Activated CD4-positive, alpha-beta T cell treated with anti-CD3 and anti-CD28 coated beads for 36 hours (primary cell): ENCODE measurements at regions of chr3 and their contacts with region 1.

Region 1: DNA sequence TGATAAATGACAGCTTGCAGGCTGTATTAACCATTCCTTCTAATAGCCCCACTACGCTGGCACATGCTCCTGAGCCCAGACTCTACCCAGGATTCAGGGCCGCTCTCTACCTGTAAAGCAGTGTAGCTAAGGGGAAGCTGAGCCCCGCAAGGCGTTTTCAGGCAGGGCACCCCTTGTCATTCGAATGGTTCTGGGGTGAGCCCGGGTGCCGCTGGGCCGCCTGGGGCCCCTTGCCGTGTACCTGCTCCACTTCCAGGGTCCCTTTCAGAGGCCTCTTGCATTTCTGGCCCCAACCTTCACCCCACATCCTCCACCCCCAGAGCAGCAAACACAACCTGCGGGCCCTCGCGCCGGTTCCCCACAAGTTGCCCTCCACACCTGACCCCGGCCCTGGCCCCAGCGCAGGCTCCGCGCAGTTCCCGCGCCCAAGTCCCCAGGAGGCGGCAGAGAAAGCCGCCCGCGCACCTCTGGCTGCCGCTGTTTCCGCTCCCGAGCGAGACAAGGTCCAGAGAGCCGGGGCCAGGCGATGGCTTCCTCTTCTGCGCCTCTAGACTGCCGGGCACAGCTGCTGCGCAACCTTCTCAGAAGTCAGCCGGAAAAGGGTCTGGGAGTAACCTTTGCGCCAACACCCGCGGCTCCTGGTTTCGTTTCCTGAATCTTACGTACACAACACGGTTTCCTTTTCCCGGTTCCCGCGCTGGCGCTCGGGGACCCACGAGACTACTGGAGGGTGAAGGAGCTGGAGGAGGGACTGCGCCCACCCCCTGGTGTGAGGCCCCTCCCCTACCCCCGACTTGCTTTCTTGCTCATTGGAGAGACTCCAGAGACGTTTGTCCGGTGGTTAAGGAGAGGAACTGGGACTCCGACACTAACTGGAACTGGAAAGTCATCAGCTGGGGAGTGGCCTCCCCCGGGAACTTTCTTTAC is at the start of gene PLSCR1:
- DNase-seq: peak; percentile 89
- ATAC-seq: peak; percentile 90
- H3K4me3 Mint-ChIP-seq: peak within 1 kb of the TSS; percentile 90
- H3K27ac Mint-ChIP-seq: peak within 1 kb of the TSS; percentile 88
- H3K4me1 Mint-ChIP-seq: peaks cover 52% of the 10 kb centered on the region
- H3K27me3 Mint-ChIP-seq: no peaks in the 10 kb centered on the region
- total RNA-seq, gene PLSCR1: 65.1 to 66.1 TPM

Region 2: GRCh38 chr3:146464005-146464595 is 80.2 kb before region 1 on chr3:
- CTCF ChIA-PET with region 1: interaction called, 6 read pairs
- POLR2A ChIA-PET with region 1: interaction called, 4 read pairs
- intact Hi-C with region 1: loop called (anchors 1 to 2 kb)
- DNase-seq: no peak
- ATAC-seq: peak; percentile 82
- H3K4me3 Mint-ChIP-seq: no peak overlapping the region
- H3K27ac Mint-ChIP-seq: peak overlapping the region; percentile 14
- H3K4me1 Mint-ChIP-seq: peaks cover 13% of the 10 kb centered on the region
- H3K27me3 Mint-ChIP-seq: no peaks in the 10 kb centered on the region

Region 3: DNA sequence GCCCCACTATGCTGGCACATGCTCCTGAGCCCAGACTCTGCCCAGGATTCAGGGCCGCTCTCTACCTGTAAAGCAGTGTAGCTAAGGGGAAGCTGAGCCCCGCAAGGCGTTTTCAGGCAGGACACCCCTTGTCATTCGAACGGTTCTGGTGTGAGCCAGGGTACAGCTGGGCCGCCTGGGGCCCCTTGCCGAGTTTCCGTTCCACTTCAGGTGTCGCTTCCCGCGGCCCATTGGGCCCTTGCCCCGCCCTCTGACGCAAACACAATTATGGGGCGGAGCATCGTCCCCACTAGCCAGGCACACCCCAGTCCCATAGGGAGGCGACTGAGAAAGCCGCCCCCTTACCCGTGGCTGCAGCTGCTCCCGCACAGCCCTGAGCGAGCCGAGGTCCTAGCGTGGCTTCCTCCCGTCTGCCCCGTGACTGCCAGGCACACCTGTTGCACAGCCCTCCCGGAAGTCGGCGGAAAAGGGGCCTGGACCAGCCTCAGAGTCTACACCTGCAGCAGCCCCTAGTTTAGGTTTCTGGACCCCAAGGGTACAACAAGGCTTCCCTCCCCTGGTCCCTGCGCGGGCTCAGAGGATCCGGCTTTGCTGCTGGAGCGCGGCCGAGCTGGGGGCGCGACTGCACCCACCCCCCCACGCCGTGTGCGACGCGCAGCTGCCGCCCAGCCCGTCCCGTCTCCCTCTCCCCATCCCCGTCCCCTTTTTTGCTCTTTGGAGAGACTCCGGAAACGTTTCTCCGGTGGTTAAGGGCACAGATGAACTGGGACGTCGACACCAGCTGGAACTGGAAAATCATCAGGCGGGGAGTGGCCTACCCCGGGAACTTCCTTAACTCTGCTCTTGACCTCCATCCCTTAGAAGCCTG is 74.9 kb before region 1 on chr3 and contains the start of gene PLSCR2:
- CTCF ChIA-PET with region 1: interaction called, 6 read pairs
- POLR2A ChIA-PET with region 1: interaction called, 4 read pairs
- intact Hi-C with region 1: loop called (anchors 1 to 2 kb)
- DNase-seq: peak; percentile 83
- ATAC-seq: peak; percentile 95
- H3K4me3 Mint-ChIP-seq: peak within 1 kb of the TSS; percentile 67
- H3K27ac Mint-ChIP-seq: peak within 1 kb of the TSS; percentile 74
- H3K4me1 Mint-ChIP-seq: peaks cover 3% of the 10 kb centered on the region
- H3K27me3 Mint-ChIP-seq: no peaks in the 10 kb centered on the region
- total RNA-seq, gene PLSCR2: 0.25 TPM in 1 of 2 experiments, not detected in the other

Region 4: GRCh38 chr3:146498002-146498736 is 46.1 kb before region 1 on chr3:
- CTCF ChIA-PET with region 1: interaction called, 4 read pairs
- POLR2A ChIA-PET with region 1: interaction called, 7 read pairs
- intact Hi-C with region 1: loop called (anchors 1 to 2 kb)
- DNase-seq: peak; percentile 62
- ATAC-seq: peak; percentile 74
- H3K4me3 Mint-ChIP-seq: peak overlapping the region; percentile 62
- H3K27ac Mint-ChIP-seq: peak overlapping the region; percentile 59
- H3K4me1 Mint-ChIP-seq: peaks cover 18% of the 10 kb centered on the region
- H3K27me3 Mint-ChIP-seq: no peaks in the 10 kb centered on the region

Region 5: GRCh38 chr3:146503461-146504202 is 40.6 kb before region 1 on chr3:
- CTCF ChIA-PET with region 1: no interaction called
- POLR2A ChIA-PET with region 1: interaction called, 7 read pairs
- intact Hi-C with region 1: loop called (anchors 1 to 2 kb)
- DNase-seq: peak; percentile 35
- ATAC-seq: peak; percentile 62
- H3K4me3 Mint-ChIP-seq: no peak overlapping the region
- H3K27ac Mint-ChIP-seq: no peak overlapping the region
- H3K4me1 Mint-ChIP-seq: peaks cover 15% of the 10 kb centered on the region
- H3K27me3 Mint-ChIP-seq: no peaks in the 10 kb centered on the region

Region 6: DNA sequence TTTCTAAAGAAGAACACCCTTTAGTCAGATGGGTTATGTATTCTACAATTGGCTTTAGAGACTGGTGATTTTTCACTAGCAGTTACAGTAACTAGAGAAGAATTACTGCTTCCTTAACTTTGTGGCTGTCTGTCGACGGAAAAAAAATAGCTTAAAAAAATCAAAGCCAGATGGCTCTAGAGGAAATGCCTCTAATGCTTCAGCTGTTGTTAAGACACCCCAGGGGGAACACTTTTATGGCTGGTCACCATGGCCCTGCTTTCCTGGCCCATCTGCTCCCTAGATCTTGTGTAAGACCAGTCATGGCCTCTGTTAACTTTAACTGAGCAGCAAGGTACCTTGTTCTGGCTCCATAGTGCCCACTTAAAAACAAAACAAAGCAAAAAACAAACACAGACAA is 259.5 kb after region 1 on chr3:
- CTCF ChIA-PET with region 1: no interaction called
- POLR2A ChIA-PET with region 1: no interaction called
- intact Hi-C with region 1: no loop called
- DNase-seq: no peak
- ATAC-seq: no peak
- H3K4me3 Mint-ChIP-seq: no peak overlapping the region
- H3K27ac Mint-ChIP-seq: no peak overlapping the region
- H3K4me1 Mint-ChIP-seq: no peaks in the 10 kb centered on the region
- H3K27me3 Mint-ChIP-seq: no peaks in the 10 kb centered on the region